ENCODE measurements at regions of chr10 and their contacts with region 1.

Region 1: DNA sequence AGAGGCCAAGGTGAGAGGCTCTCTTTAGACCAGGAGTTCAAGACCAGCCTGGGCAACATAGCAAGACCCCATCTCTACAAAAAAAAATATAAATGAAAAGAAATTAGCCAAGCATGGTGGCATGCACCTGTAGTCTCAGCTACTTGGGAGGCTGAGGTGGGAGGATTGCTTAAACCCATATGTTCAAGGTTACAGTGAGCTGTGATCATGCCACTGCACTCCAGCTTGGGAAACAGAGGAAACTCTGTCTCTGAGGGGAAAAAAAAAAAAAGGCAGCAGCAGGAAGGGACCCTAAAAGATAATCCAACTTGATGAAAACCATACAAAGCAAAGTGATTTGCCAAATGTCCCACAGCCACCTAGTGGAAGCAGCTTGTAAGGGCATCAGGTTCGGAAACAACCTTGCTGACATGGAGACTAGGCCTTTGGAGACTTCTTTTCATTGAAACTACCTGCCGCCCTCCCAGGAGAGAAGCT is 15.6 kb upstream of the PBLD start:
- DNase-seq: no peak
- ATAC-seq: peak; percentile 82
- H3K4me3 ChIP-seq: no peak overlapping the region
- H3K27ac ChIP-seq: no peak overlapping the region
- H3K4me1 ChIP-seq: no peaks in the 10 kb centered on the region
- H3K27me3 ChIP-seq: no peaks in the 10 kb centered on the region
- CTCF ChIP-seq: peak; percentile 63 to 83 (median 81)
- EP300 ChIP-seq: no peak
- POLR2A ChIP-seq: no peak
- RAD21 ChIP-seq: peak; percentile 54

Region 2: DNA sequence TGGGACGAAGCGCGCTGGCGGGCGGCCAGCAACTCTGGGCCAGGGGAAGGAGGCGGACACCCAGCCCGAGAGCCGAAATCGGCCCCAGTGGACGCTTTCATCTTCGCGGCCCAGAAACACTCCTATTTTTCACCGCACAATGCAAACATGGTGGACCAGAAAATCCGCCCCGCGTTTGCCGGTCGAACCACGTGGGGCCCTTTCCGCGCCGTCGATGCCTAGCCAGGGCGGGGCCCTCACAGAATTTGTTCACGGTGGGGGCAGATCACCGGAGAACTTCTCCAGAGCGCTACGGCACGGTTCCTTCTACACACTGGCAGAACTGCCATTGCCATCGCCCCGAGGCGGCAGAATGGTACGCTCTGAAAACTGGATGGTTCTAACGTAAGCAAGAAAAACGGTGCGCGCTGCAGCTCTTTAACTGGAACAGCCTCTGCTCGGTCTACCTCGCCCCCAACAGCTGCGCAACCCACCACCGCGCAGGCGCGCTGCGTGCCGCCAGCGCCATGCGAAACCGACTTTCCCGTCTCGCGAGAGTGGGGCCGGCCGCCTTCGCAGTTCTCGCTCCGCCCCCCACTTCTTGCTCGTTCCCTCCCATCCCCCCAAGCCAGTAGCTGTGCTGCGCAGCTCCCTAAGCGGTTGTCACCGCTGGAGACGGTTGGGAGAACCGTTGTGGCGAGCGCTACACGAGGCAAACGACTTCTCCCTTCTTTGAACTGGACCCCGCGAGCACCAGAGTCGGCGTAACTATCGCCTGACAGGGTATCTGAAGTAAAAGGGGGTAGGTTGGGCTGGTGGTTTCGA is 16.6 kb before region 1 on chr10 and contains the start of gene HNRNPH3:
- CTCF ChIA-PET with region 1: interaction called, 32 read pairs
- POLR2A ChIA-PET with region 1: interaction called, 4 read pairs
- RAD21 ChIA-PET with region 1: interaction called, 5 read pairs
- SMC1A ChIA-PET with region 1: interaction called, 4 read pairs
- in situ Hi-C with region 1: no loop called
- intact Hi-C with region 1: no loop called
- DNase-seq: peak; percentile 93
- ATAC-seq: peak; percentile 80
- H3K4me3 ChIP-seq: peak within 1 kb of the TSS; percentile 99
- H3K27ac ChIP-seq: peak within 1 kb of the TSS; percentile 99
- H3K4me1 ChIP-seq: no peaks in the 10 kb centered on the region; the same call in 1 of the 2 replicates
- H3K27me3 ChIP-seq: no peaks in the 10 kb centered on the region
- CTCF ChIP-seq: no peak
- EP300 ChIP-seq: peak in 1 of 2 experiments; percentile 37; a peak in 1 of 4 replicates
- POLR2A ChIP-seq: peak; percentile 98
- RAD21 ChIP-seq: no peak
- polyA plus RNA-seq, gene HNRNPH3: 76.0 to 98.7 TPM

Region 3: GRCh38 chr10:68364101-68364886 is 16.0 kb after region 1 on chr10:
- CTCF ChIA-PET with region 1: interaction called, 11 read pairs
- POLR2A ChIA-PET with region 1: interaction called, 4 read pairs
- RAD21 ChIA-PET with region 1: no interaction called
- SMC1A ChIA-PET with region 1: interaction called, 10 read pairs
- in situ Hi-C with region 1: no loop called
- intact Hi-C with region 1: no loop called
- DNase-seq: no peak
- ATAC-seq: no peak
- H3K4me3 ChIP-seq: no peak overlapping the region
- H3K27ac ChIP-seq: no peak overlapping the region
- H3K4me1 ChIP-seq: no peaks in the 10 kb centered on the region
- H3K27me3 ChIP-seq: no peaks in the 10 kb centered on the region
- CTCF ChIP-seq: no peak
- EP300 ChIP-seq: no peak
- POLR2A ChIP-seq: no peak
- RAD21 ChIP-seq: no peak

Measured in GM12878 (cell line).